Posterior vena cava (tissue), 2 donors: ENCODE measurements at regions of chr22 and their contacts with region 1.

Region 1: DNA sequence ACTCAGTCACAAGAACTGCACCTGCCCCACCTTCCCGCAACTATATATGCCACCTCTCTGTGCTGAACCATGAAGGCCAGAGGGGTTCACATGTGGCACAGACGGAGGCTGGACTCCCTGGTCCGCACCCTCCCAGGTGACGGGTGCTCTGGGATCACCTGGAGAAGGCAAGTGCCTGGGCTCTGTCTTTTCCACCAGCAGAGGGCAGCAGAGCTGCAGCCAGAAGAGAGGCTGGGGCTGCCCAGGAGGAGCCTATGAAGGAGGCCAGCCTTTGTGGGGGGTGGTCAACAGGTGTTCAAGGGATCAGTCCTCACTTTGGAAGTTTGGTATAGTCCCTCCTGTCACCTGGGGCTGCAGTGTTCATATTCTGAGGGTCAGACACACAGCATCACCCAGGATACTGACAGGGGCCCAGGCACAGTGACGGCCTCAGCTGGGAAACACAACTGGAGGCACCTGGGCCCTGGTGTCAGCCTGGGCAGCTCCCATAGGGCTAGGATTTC is 39.2 kb upstream of the IGLL5 start:
- DNase-seq: no peak

Region 2: DNA sequence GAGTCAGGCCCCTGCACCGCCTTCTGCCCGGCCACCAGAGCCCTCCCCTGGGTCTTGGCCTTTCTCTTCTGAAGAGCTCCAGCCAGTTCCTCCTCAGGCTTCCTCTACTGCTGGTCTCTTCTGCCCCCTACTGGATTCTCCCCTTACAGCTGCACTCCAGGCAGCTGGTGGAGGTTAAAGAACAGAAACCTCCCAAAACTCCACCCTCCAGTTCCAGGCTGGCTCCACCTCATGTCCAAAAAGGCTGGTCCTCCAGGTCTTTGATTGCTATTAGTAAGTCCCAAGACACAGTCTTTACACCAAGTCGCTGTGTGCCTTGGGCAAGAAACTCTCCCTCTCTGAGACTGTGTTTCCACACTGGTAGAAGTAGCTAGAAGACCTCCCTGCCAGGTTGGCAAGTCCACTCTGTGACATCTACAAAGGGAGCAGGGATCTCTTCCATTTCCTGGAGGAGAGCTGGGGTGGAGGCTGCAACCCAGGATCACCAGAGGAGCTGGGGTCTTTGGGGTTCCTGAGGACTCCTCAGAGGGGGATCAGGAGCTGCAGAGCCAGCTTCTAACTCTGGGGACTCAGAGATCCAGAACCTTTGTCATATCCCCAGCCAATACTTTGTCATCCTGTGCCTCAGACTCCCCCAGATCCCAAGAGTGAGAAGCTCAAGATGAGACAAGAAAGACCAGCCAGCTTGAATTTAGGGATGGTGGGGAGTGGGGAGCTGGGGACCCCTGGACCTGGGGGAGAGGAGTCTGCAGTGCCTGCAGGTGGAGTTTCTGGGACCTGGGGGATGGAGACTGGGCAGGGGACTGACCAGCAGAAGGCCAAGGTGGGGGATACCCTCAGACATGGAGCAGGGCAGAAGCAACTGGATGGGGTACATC is 35.8 kb after region 1 on chr22:
- intact Hi-C with region 1: no loop called
- DNase-seq: no peak

Region 3: DNA sequence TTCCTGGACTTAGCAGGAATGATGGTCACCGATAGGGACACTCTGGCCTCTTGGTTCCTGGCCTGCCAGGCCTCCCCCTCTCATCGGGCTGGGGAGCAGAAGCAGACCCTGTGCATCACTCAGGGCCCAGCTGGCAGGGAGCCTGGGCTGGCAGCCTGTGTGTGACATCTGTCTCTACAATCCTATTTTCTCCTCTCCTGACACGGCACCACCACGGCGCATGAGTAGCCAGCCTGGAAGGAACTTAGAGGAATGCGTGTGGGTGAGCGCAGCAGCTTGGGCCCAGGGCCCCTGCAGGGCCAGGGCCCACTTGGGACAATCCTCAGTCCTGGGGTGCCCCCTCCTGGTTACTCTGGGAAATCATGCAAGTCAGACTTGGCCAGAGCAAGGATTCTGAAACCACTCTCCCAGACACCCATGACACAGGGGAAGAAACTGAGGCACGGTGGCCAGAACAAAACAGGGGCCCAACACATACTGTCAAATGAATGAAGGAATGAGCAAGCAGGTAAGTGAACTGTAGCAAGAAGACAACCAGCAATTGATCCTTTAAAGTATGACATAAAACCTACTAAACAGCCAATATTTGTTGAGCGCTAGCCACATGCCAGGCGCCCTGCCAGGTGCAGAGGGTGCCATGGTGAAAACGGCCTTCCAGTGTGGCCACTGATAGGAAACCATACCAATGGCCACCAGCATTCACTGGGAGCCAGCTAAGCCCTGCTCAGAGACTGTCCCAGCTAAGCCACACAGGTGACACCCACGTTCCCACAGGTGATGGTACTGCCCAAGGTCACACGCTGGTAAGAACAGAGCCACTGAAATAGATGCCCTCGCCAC is 280.1 kb after region 1 on chr22:
- intact Hi-C with region 1: loop called in 1 of 2 experiments (anchors 5 kb)
- DNase-seq: peak; percentile 88